ENCODE measurements at regions of chr12 and their contacts with region 1.

Region 1: GRCh38 chr12:110012137-110012536 is 12.9 kb downstream of the ANKRD13A start:
- DNase-seq: peak in 3 of 9 experiments; percentile 30 to 47 (median 33)
- ATAC-seq: peak; percentile 62
- H3K4me3 ChIP-seq: no peak overlapping the region
- H3K4me3 Mint-ChIP-seq: no peak overlapping the region
- H3K27ac ChIP-seq: no peak overlapping the region
- H3K27ac Mint-ChIP-seq: peak overlapping the region; percentile 76
- H3K4me1 ChIP-seq: peaks cover 12% of the 10 kb centered on the region
- H3K4me1 Mint-ChIP-seq: peaks cover 43% of the 10 kb centered on the region
- H3K27me3 ChIP-seq: no peaks in the 10 kb centered on the region
- H3K27me3 Mint-ChIP-seq: no peaks in the 10 kb centered on the region
- CTCF ChIP-seq: no peak

Region 2: DNA sequence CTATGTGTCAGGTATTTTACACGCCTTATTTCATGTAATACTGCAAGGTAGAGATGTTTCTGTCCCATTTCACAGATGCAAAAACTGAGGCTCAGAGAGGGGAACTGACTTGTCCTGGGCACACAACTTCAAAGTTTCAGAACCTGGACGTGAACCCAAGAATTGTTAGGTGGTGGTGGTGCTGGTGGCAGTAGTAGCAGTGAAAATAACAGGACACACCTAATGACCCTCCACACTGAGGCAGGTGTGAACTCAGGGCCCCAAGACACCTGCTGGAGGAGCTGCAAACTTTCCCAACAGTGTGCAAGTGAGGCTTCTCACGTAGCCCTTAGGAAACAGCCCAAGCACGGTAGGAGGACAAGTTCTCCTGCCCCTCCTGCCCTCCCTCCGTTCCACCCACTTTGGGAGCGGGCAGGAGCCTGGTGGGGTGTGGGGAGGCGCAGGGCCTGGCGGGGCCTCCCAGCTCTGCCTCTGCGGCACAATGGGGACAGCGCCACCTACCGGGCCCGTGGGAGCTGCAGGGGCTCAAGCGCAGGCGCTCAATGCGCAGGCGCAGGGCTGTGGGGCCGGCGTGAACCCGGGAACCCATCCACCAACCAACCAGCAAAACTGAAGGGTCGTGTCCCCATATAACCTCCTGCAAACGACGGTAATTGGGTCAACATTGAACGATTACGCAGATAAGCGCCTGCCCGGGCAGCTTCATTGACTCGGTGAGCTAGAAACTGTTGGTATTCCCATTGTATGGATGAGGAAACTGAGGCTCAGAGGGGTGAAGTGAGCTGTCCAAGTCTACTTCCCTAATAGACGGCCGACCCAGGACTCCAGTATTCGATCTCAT is 166.9 kb before region 1 on chr12:
- CTCF ChIA-PET with region 1: interaction called, 3 read pairs
- POLR2A ChIA-PET with region 1: no interaction called
- intact Hi-C with region 1: loop called in 1 of 2 experiments (anchors 5 kb)
- DNase-seq: peak; percentile 73 to 92 (median 89)
- ATAC-seq: peak; percentile 100
- H3K4me3 ChIP-seq: peak overlapping the region; percentile 19 to 36
- H3K4me3 Mint-ChIP-seq: no peak overlapping the region
- H3K27ac ChIP-seq: no peak overlapping the region
- H3K27ac Mint-ChIP-seq: no peak overlapping the region
- H3K4me1 ChIP-seq: peaks cover 9% of the 10 kb centered on the region
- H3K4me1 Mint-ChIP-seq: peaks cover 3% of the 10 kb centered on the region
- H3K27me3 ChIP-seq: no peaks in the 10 kb centered on the region
- H3K27me3 Mint-ChIP-seq: no peaks in the 10 kb centered on the region
- CTCF ChIP-seq: peak; percentile 98

Region 3: DNA sequence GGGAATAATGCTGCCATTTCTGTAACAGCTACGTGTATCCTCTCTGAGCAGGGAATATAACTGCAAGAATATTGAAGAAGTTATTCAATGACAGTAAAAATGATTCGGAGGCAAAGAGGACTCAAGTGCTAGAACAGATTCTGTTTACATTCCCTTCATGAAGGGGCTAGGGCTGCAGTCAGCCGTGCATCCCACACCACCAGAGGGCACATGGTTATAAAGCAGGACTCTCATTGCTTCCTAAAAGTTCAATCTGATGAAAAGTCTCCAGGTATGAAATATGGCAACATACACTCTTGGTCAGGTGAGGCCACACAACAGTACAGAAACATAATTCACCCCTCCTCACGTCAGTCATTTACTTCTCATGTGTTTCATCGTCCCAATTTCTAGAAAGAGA is 78.1 kb before region 1 on chr12:
- CTCF ChIA-PET with region 1: no interaction called
- POLR2A ChIA-PET with region 1: no interaction called
- intact Hi-C with region 1: loop called (anchors 1 to 2 kb)
- DNase-seq: no peak
- ATAC-seq: no peak
- H3K4me3 ChIP-seq: no peak overlapping the region
- H3K4me3 Mint-ChIP-seq: no peak overlapping the region
- H3K27ac ChIP-seq: no peak overlapping the region
- H3K27ac Mint-ChIP-seq: no peak overlapping the region
- H3K4me1 ChIP-seq: no peaks in the 10 kb centered on the region
- H3K4me1 Mint-ChIP-seq: no peaks in the 10 kb centered on the region
- H3K27me3 ChIP-seq: no peaks in the 10 kb centered on the region
- H3K27me3 Mint-ChIP-seq: no peaks in the 10 kb centered on the region
- CTCF ChIP-seq: no peak

Measured in CD8-positive, alpha-beta T cell (primary cell).